Stomach (tissue), 19 donors: ENCODE measurements at regions of chr3 and their contacts with region 1.

Region 1: DNA sequence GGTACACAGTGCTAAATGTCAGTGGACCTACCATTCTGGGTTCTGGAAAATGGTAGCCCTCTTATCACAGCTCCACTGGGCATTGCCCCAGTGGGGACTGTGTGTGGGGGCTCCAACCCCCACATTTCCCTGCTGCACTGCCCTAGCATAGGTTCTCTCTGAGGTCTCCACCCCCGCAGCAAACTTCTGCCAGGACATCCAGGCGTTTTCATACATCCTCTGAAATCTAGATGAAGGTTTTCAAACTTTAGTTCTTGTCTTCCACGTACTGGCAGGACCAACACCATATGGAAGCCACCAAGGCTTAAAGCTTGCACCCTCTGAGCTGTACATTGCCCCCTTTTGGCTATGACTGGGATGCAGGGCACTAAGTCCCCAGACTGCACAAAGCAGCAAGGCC is 788.2 kb upstream of the ALCAM start:
- DNase-seq: no peak
- H3K4me3 ChIP-seq: no peak overlapping the region
- H3K27ac ChIP-seq: no peak overlapping the region
- H3K4me1 ChIP-seq: no peaks in the 10 kb centered on the region
- H3K27me3 ChIP-seq: no peaks in the 10 kb centered on the region
- CTCF ChIP-seq: no peak
- EP300 ChIP-seq: no peak
- POLR2A ChIP-seq: no peak

Region 2: GRCh38 chr3:104154896-104155295 is 423.7 kb before region 1 on chr3:
- intact Hi-C with region 1: no loop called
- DNase-seq: no peak
- H3K4me3 ChIP-seq: no peak overlapping the region
- H3K27ac ChIP-seq: no peak overlapping the region
- H3K4me1 ChIP-seq: no peaks in the 10 kb centered on the region
- H3K27me3 ChIP-seq: no peaks in the 10 kb centered on the region
- CTCF ChIP-seq: no peak
- EP300 ChIP-seq: no peak
- POLR2A ChIP-seq: no peak

Region 3: GRCh38 chr3:104687362-104687761 is 108.8 kb after region 1 on chr3:
- intact Hi-C with region 1: no loop called
- DNase-seq: no peak
- H3K4me3 ChIP-seq: no peak overlapping the region
- H3K27ac ChIP-seq: no peak overlapping the region
- H3K4me1 ChIP-seq: no peaks in the 10 kb centered on the region
- H3K27me3 ChIP-seq: no peaks in the 10 kb centered on the region
- CTCF ChIP-seq: no peak
- EP300 ChIP-seq: no peak
- POLR2A ChIP-seq: no peak

Region 4: GRCh38 chr3:104763007-104763406 is 184.4 kb after region 1 on chr3:
- intact Hi-C with region 1: no loop called
- DNase-seq: peak in 1 of 2 donors; percentile 40
- H3K4me3 ChIP-seq: no peak overlapping the region
- H3K27ac ChIP-seq: no peak overlapping the region
- H3K4me1 ChIP-seq: peaks cover 0 to 7% (median 0%) of the 10 kb centered on the region in 4 donors
- H3K27me3 ChIP-seq: no peaks in the 10 kb centered on the region
- CTCF ChIP-seq: no peak
- EP300 ChIP-seq: no peak
- POLR2A ChIP-seq: no peak

Region 5: DNA sequence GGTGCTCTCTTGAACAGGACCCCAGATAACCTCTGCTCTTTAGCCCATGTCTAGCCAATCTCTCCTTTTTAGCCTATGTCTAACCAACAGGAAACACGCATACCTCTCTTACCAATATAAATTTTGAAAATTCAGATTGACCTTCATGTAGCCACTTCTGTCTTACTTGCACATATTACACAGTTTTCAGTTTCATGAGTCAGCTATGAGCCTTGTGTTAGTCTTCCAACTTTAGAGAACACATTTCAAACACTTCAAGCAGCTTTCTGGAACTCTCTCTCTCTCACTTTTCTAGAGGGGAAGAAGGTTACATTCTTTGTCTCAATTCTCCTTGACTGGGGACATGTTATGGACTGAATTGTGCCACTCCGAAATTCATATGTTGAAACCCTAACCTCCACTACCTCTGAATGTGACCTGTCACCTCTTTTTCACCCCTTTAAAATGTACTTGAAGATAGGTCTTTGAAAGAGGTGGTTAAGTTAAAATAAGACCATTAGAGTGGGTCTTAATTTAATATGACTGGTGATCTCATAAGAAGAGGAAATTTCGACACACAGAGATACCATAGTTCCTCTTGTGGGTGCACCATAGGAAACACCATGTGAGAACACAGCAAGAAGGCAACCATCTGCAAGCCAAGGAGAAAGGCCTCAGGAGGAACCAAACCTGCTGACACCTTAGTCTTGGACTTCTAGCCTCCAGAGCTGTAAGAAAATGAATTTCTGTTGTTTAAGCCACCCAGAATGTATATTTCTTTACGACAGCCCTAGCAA is 307.9 kb after region 1 on chr3:
- intact Hi-C with region 1: no loop called
- DNase-seq: no peak
- H3K4me3 ChIP-seq: no peak overlapping the region
- H3K27ac ChIP-seq: no peak overlapping the region
- H3K4me1 ChIP-seq: no peaks in the 10 kb centered on the region
- H3K27me3 ChIP-seq: no peaks in the 10 kb centered on the region
- CTCF ChIP-seq: no peak
- EP300 ChIP-seq: no peak
- POLR2A ChIP-seq: no peak

Region 6: DNA sequence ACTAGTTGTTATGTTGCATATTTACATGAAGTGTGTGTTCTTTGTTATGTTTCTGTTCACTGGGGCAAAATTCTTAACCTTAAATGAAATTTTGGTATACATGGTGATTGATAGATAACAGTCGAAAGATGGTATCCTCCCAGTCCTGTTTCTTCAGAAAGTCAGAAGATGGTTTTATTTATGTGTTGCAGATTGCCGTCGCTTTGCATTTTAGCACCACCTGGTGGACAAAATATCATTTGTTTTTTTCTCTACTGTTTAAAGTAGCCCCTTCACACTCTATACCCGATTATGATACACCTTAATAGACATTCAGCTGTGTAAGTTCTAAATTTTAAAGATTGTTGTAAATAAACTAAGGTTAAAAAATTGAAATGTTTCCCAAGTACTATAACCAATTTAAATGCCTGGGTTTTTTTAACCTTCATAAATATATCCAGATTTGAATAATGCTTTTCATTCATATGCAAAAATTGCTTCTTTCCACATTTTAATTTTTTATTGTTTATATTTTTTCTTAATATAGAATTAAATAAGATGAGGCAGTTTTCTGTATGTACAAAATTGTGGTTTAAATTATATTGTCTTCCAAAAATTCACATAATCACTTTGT is 940.4 kb after region 1 on chr3:
- intact Hi-C with region 1: loop called (anchors 10 kb)
- DNase-seq: peak in 1 of 2 donors; percentile 83
- H3K4me3 ChIP-seq: no peak overlapping the region
- H3K27ac ChIP-seq: no peak overlapping the region
- H3K4me1 ChIP-seq: peaks cover 0 to 5% (median 0%) of the 10 kb centered on the region in 4 donors
- H3K27me3 ChIP-seq: no peaks in the 10 kb centered on the region
- CTCF ChIP-seq: peak in 4 of 7 experiments; percentile 49 to 71 (median 58)
- EP300 ChIP-seq: no peak
- POLR2A ChIP-seq: no peak